ENCODE measurements at regions of chr5 and their contacts with region 1.

Region 1: DNA sequence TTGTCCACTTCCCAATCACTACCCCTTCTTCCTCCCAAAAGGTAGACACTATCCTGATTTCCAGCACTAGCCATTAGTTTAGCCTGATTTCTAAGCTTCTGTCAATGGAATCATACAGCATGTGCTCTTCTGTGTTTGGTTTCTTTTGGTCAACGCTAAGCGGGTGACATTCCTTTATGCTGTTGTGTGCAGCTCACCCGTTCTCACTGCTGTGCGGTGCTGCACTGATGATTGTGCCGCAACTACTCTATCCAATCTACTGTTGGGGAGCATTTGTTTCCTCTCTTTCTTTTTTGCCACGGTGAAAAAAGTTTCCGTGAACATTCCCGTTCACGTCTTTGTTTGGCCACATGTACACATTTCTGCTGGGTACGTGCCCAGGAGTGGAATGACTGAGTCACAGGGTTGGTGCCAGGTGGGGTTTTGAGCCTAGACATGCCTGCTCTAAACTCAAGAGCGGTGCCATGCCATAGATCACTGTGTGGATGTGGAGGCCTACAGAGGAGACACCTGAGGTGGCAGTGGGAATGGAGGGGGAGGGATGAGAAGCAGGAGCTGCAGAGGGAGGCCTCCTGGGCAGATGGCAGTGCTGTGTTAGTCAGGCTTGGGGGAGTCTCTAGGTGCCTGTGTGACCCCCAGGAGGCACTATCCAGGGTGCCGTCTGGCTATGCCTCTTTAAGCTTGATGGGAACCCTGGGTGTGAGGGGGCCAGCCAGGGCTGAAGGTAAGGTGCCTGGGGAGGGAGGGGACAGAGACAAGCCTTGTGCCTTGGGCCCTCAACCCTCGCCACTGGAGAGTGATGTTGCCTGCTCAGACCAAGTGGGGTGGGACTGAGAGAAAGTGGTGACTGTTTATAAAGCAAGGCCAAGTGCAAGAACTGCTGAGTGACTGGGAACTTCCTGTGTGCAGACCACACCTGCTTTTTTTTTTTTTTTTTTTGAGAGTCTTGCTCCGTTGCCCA is 11.4 kb upstream of the ANKRD33B start:
- DNase-seq: no peak
- H3K4me3 ChIP-seq: no peak overlapping the region
- H3K4me3 Mint-ChIP-seq: peak overlapping the region; percentile 56
- H3K27ac Mint-ChIP-seq: peak overlapping the region; percentile 97
- H3K4me1 ChIP-seq: peaks cover 56% of the 10 kb centered on the region
- H3K4me1 Mint-ChIP-seq: peaks cover 57% of the 10 kb centered on the region
- H3K27me3 ChIP-seq: no peaks in the 10 kb centered on the region
- H3K27me3 Mint-ChIP-seq: no peaks in the 10 kb centered on the region
- CTCF ChIP-seq: no peak

Region 2: DNA sequence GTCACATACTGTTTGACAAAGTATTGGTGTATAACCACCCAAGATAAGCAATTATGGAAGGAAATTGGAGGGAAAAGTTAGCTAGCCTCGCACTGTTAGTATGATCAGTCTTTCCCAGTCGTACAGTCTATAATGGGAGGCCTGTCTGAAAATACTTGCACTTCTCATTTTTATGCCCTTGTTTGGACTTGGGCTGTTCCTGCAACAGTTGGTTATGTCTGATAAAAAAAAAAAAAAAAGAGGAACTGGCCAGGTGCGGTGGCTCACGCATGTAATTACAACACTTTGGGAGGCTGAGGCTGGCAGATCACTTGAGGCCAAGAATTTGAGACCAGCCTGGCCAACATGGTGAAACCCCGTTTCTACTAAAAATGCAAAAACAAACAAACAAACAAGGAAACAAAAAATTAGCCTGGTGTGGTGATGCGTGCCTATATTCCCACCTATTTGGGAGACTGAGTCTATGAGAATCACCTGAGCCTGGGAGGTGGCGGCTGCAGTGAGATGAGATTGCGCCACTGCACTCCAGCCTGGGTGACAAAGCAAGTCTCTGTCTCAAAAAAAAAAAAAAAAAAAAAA is 46.9 kb before region 1 on chr5:
- CTCF ChIA-PET with region 1: no interaction called
- POLR2A ChIA-PET with region 1: interaction called, 3 read pairs
- intact Hi-C with region 1: loop called (anchors 2 kb)
- DNase-seq: no peak
- H3K4me3 ChIP-seq: no peak overlapping the region
- H3K4me3 Mint-ChIP-seq: no peak overlapping the region
- H3K27ac Mint-ChIP-seq: no peak overlapping the region
- H3K4me1 ChIP-seq: peaks cover 31% of the 10 kb centered on the region
- H3K4me1 Mint-ChIP-seq: peaks cover 20% of the 10 kb centered on the region
- H3K27me3 ChIP-seq: no peaks in the 10 kb centered on the region
- H3K27me3 Mint-ChIP-seq: no peaks in the 10 kb centered on the region
- CTCF ChIP-seq: no peak

Region 3: GRCh38 chr5:10518347-10518746 is 34.1 kb before region 1 on chr5:
- CTCF ChIA-PET with region 1: no interaction called
- POLR2A ChIA-PET with region 1: no interaction called
- intact Hi-C with region 1: loop called (anchors 1 kb)
- DNase-seq: peak in 1 of 2 experiments; percentile 42
- H3K4me3 ChIP-seq: no peak overlapping the region
- H3K4me3 Mint-ChIP-seq: no peak overlapping the region
- H3K27ac Mint-ChIP-seq: peak overlapping the region; percentile 4
- H3K4me1 ChIP-seq: peaks cover 5% of the 10 kb centered on the region
- H3K4me1 Mint-ChIP-seq: peaks cover 7% of the 10 kb centered on the region
- H3K27me3 ChIP-seq: no peaks in the 10 kb centered on the region
- H3K27me3 Mint-ChIP-seq: no peaks in the 10 kb centered on the region
- CTCF ChIP-seq: no peak

Region 4: GRCh38 chr5:10563945-10564837 is 11.7 kb after region 1 on chr5 and contains the start of gene ANKRD33B:
- CTCF ChIA-PET with region 1: interaction called, 5 read pairs
- POLR2A ChIA-PET with region 1: interaction called, 14 read pairs
- intact Hi-C with region 1: loop called (anchors 1 kb)
- DNase-seq: peak; percentile 82 to 86
- H3K4me3 ChIP-seq: peak within 1 kb of the TSS; percentile 77
- H3K4me3 Mint-ChIP-seq: peak within 1 kb of the TSS; percentile 90
- H3K27ac Mint-ChIP-seq: peak within 1 kb of the TSS; percentile 10
- H3K4me1 ChIP-seq: peaks cover 50% of the 10 kb centered on the region
- H3K4me1 Mint-ChIP-seq: peaks cover 27% of the 10 kb centered on the region
- H3K27me3 ChIP-seq: no peaks in the 10 kb centered on the region
- H3K27me3 Mint-ChIP-seq: no peaks in the 10 kb centered on the region
- CTCF ChIP-seq: no peak
- total RNA-seq, gene ANKRD33B: 22.8 and 25.3 TPM in 2 replicates

Region 5: GRCh38 chr5:10635257-10635866 is 82.9 kb after region 1 on chr5:
- CTCF ChIA-PET with region 1: no interaction called
- POLR2A ChIA-PET with region 1: no interaction called
- intact Hi-C with region 1: no loop called
- DNase-seq: no peak
- H3K4me3 ChIP-seq: no peak overlapping the region
- H3K4me3 Mint-ChIP-seq: no peak overlapping the region
- H3K27ac Mint-ChIP-seq: no peak overlapping the region
- H3K4me1 ChIP-seq: no peaks in the 10 kb centered on the region
- H3K4me1 Mint-ChIP-seq: no peaks in the 10 kb centered on the region
- H3K27me3 ChIP-seq: no peaks in the 10 kb centered on the region
- H3K27me3 Mint-ChIP-seq: no peaks in the 10 kb centered on the region
- CTCF ChIP-seq: no peak